CD4-positive, alpha-beta memory T cell (primary cell): ENCODE measurements at regions of chr3 and their contacts with region 1.

Region 1: GRCh38 chr3:133805527-133806475 is at the start of gene SRPRB:
- DNase-seq: peak; percentile 93 to 98 (median 96)
- H3K4me3 ChIP-seq: peak within 1 kb of the TSS; percentile 57 to 85
- H3K4me3 Mint-ChIP-seq: peak within 1 kb of the TSS; percentile 94 to 98 (median 98)
- H3K27ac ChIP-seq: peak within 1 kb of the TSS; percentile 65
- H3K27ac Mint-ChIP-seq: peak within 1 kb of the TSS; percentile 92 to 98 (median 95)
- H3K4me1 ChIP-seq: peaks cover 29% of the 10 kb centered on the region
- H3K4me1 Mint-ChIP-seq: peaks cover 20 to 46% (median 29%) of the 10 kb centered on the region in 4 donors
- H3K27me3 ChIP-seq: no peaks in the 10 kb centered on the region
- H3K27me3 Mint-ChIP-seq: peaks cover 0 to 5% of the 10 kb centered on the region in 2 donors
- total RNA-seq, gene SRPRB: 45.6 to 49.8 TPM

Region 2: GRCh38 chr3:132416807-132417694 is 1388.8 kb before region 1 on chr3 and contains the start of gene DNAJC13:
- CTCF ChIA-PET with region 1: no interaction called
- POLR2A ChIA-PET with region 1: no interaction called
- intact Hi-C with region 1: loop called (anchors 10 kb)
- DNase-seq: peak; percentile 91 to 95 (median 93)
- H3K4me3 ChIP-seq: peak within 1 kb of the TSS; percentile 84 to 89
- H3K4me3 Mint-ChIP-seq: peak within 1 kb of the TSS; percentile 96 to 100 (median 99)
- H3K27ac ChIP-seq: peak within 1 kb of the TSS; percentile 82
- H3K27ac Mint-ChIP-seq: peak within 1 kb of the TSS; percentile 95 to 99 (median 98)
- H3K4me1 ChIP-seq: peaks cover 23% of the 10 kb centered on the region
- H3K4me1 Mint-ChIP-seq: peaks cover 20 to 38% (median 26%) of the 10 kb centered on the region in 4 donors
- H3K27me3 ChIP-seq: no peaks in the 10 kb centered on the region
- H3K27me3 Mint-ChIP-seq: no peaks in the 10 kb centered on the region
- total RNA-seq, gene DNAJC13: 43.1 to 43.5 TPM

Region 3: GRCh38 chr3:133448478-133449122 is 357.2 kb before region 1 on chr3:
- CTCF ChIA-PET with region 1: no interaction called
- POLR2A ChIA-PET with region 1: no interaction called
- intact Hi-C with region 1: loop called (anchors 5 kb)
- DNase-seq: peak; percentile 22 to 56 (median 32)
- H3K4me3 ChIP-seq: no peak overlapping the region
- H3K4me3 Mint-ChIP-seq: peak overlapping the region in 7 of 8 donors; percentile 13 to 81 (median 60)
- H3K27ac ChIP-seq: no peak overlapping the region
- H3K27ac Mint-ChIP-seq: peak overlapping the region; percentile 57 to 96 (median 89)
- H3K4me1 ChIP-seq: peaks cover 21% of the 10 kb centered on the region
- H3K4me1 Mint-ChIP-seq: peaks cover 19 to 38% (median 27%) of the 10 kb centered on the region in 4 donors
- H3K27me3 ChIP-seq: no peaks in the 10 kb centered on the region
- H3K27me3 Mint-ChIP-seq: no peaks in the 10 kb centered on the region

Region 4: DNA sequence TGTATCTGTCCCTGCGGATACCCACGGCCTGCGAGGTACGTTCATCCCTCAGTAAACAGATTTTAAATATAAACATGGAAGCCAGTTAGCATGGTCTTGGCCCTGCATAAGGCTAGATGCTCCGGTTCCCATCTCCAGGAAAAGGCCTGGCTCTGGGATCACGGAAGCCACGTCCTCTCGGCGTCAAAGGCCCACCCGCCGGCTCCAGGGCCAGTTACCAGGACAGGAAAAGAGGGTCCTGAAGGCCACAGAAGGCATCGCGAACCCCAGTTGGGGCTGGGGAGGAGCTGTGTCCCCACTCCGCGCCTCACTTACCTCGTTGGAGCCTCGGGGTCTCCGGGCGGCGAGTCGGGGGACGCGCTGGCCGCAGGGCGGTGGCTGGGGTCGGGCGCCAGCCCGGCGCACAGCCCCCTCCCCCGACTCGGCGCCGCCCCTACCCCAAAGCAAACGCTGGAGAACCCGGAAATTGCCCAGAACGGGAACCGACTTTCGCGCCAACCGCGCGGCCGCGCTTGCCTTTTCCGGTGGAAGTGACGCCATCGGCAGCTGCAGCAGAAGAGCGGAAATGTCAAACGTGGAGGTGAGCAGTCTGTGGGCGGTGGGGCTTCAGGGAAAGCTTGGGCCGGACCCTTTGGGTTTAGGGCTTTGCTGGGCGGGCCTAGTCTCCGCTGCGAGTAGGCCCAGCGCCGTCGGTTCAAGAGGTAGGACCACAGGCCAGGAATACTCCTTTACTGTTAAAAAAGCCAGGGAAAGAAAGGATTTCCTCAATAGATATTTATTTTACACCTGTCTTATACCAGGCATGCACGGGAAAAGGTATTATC is 144.1 kb before region 1 on chr3 and contains the start of gene TOPBP1:
- CTCF ChIA-PET with region 1: no interaction called
- POLR2A ChIA-PET with region 1: no interaction called
- intact Hi-C with region 1: loop called (anchors 1 kb)
- DNase-seq: peak; percentile 81 to 90 (median 85)
- H3K4me3 ChIP-seq: peak within 1 kb of the TSS; percentile 78 to 99
- H3K4me3 Mint-ChIP-seq: peak within 1 kb of the TSS; percentile 98 to 99 (median 98)
- H3K27ac ChIP-seq: peak within 1 kb of the TSS; percentile 81
- H3K27ac Mint-ChIP-seq: peak within 1 kb of the TSS; percentile 98 to 99 (median 99)
- H3K4me1 ChIP-seq: peaks cover 32% of the 10 kb centered on the region
- H3K4me1 Mint-ChIP-seq: peaks cover 29 to 52% (median 40%) of the 10 kb centered on the region in 4 donors
- H3K27me3 ChIP-seq: no peaks in the 10 kb centered on the region
- H3K27me3 Mint-ChIP-seq: no peaks in the 10 kb centered on the region
- total RNA-seq, gene TOPBP1: 42.0 to 43.2 TPM

Region 5: DNA sequence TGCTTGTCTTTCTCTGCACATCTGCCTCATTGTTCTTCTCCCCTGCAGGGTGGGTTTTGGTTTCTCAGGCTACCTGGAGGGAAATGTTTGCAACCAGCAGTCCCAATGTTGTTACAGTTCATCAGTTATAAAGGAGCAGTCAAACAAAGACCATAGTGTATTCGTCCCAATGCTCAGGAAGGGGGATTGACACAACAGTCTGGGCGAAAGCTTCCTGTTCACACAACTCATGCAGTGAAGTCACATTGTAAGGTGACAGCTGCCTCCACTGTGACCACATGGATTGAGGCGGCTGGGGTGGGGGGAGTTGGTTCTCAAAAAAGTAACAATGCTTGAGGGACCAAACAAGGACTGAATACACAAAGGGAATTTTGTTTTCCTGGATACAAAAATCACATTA is 88.4 kb before region 1 on chr3:
- CTCF ChIA-PET with region 1: no interaction called
- POLR2A ChIA-PET with region 1: no interaction called
- intact Hi-C with region 1: no loop called
- DNase-seq: no peak
- H3K4me3 ChIP-seq: no peak overlapping the region
- H3K4me3 Mint-ChIP-seq: no peak overlapping the region
- H3K27ac ChIP-seq: no peak overlapping the region
- H3K27ac Mint-ChIP-seq: no peak overlapping the region
- H3K4me1 ChIP-seq: no peaks in the 10 kb centered on the region
- H3K4me1 Mint-ChIP-seq: no peaks in the 10 kb centered on the region
- H3K27me3 ChIP-seq: no peaks in the 10 kb centered on the region
- H3K27me3 Mint-ChIP-seq: peaks cover 7 to 10% of the 10 kb centered on the region in 2 donors

Region 6: GRCh38 chr3:133821767-133822638 is 16.2 kb after region 1 on chr3:
- CTCF ChIA-PET with region 1: interaction called, 19 read pairs
- POLR2A ChIA-PET with region 1: no interaction called
- intact Hi-C with region 1: loop called (anchors 1 kb)
- DNase-seq: no peak
- H3K4me3 ChIP-seq: no peak overlapping the region
- H3K4me3 Mint-ChIP-seq: no peak overlapping the region
- H3K27ac ChIP-seq: no peak overlapping the region
- H3K27ac Mint-ChIP-seq: peak overlapping the region in 3 of 7 donors; percentile 22 to 47 (median 32)
- H3K4me1 ChIP-seq: no peaks in the 10 kb centered on the region
- H3K4me1 Mint-ChIP-seq: peaks cover 0 to 4% (median 2%) of the 10 kb centered on the region in 4 donors
- H3K27me3 ChIP-seq: no peaks in the 10 kb centered on the region
- H3K27me3 Mint-ChIP-seq: no peaks in the 10 kb centered on the region